PC-9 (cell line): ENCODE measurements at regions of chr12 and their contacts with region 1.

Region 1: GRCh38 chr12:84793558-84794296 is 118.9 kb downstream of the SLC6A15 start:
- DNase-seq: peak in 1 of 2 experiments; percentile 40
- H3K4me3 ChIP-seq: no peak overlapping the region
- H3K27ac ChIP-seq: no peak overlapping the region
- H3K4me1 ChIP-seq: no peaks in the 10 kb centered on the region
- H3K27me3 ChIP-seq: no peaks in the 10 kb centered on the region
- CTCF ChIP-seq: no peak

Region 2: DNA sequence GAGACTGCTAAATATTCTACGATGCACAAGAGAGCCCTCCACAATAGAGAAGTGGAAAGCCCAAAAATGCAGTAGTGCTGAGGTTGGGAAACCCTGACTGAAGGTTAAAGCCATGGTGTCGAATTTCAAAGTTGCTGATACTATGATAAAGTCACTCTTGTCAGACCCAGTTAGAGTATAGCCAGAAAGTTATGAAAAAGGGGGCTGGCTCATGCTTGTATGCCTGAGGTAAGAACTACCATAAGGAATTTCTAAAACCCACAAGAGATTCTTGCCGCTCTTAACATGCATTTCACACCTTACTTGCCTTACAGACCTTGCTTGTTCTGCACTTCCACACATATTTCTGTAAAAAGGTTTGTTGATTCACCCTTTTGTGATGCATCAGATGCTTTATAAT is 65.8 kb before region 1 on chr12:
- CTCF ChIA-PET with region 1: no interaction called
- POLR2A ChIA-PET with region 1: no interaction called
- intact Hi-C with region 1: loop called (anchors 1 kb)
- DNase-seq: peak; percentile 36 to 52
- H3K4me3 ChIP-seq: no peak overlapping the region
- H3K27ac ChIP-seq: no peak overlapping the region
- H3K4me1 ChIP-seq: 0 out of 2 replicates have a peak, but pooled peaks cover 3% of the 10 kb centered on the region
- H3K27me3 ChIP-seq: no peaks in the 10 kb centered on the region
- CTCF ChIP-seq: no peak

Region 3: DNA sequence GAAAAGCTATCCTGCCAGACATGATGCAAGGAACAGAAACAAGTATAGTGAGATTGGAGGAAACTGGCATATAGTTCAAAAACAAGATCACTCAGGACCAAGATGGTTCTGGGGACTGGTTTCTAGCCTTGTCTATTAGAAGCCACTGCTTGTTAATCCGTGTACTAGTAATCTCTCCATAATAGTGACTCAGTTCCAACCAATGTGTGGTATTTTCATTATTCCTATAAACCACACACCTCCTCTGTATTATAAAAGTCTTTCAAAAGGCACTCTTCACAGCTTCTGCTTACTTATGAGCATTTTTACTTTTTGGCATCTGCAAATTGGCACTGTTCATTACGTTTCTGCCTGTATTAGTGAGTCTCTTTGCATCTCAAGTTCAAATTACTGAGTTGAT is 21.4 kb before region 1 on chr12:
- CTCF ChIA-PET with region 1: no interaction called
- POLR2A ChIA-PET with region 1: no interaction called
- intact Hi-C with region 1: loop called (anchors 2 kb)
- DNase-seq: no peak
- H3K4me3 ChIP-seq: no peak overlapping the region
- H3K27ac ChIP-seq: no peak overlapping the region
- H3K4me1 ChIP-seq: no peaks in the 10 kb centered on the region
- H3K27me3 ChIP-seq: no peaks in the 10 kb centered on the region
- CTCF ChIP-seq: no peak